A673 (cell line): ENCODE measurements at regions of chr10 and their contacts with region 1.

Region 1: GRCh38 chr10:74081192-74081803 is 69.3 kb downstream of the AP3M1 start:
- DNase-seq: peak; percentile 84
- H3K4me3 ChIP-seq: no peak overlapping the region
- H3K27ac ChIP-seq: peak overlapping the region; percentile 90
- H3K4me1 ChIP-seq: peaks cover 56% of the 10 kb centered on the region
- H3K27me3 ChIP-seq: no peaks in the 10 kb centered on the region
- CTCF ChIP-seq: peak; percentile 87

Region 2: GRCh38 chr10:73965890-73966768 is 115.2 kb before region 1 on chr10:
- CTCF ChIA-PET with region 1: interaction called, 11 read pairs
- POLR2A ChIA-PET with region 1: no interaction called
- intact Hi-C with region 1: loop called (anchors 2 kb)
- DNase-seq: peak; percentile 100
- H3K4me3 ChIP-seq: no peak overlapping the region
- H3K27ac ChIP-seq: peak overlapping the region; percentile 98
- H3K4me1 ChIP-seq: peaks cover 46% of the 10 kb centered on the region
- H3K27me3 ChIP-seq: no peaks in the 10 kb centered on the region
- CTCF ChIP-seq: no peak

Region 3: DNA sequence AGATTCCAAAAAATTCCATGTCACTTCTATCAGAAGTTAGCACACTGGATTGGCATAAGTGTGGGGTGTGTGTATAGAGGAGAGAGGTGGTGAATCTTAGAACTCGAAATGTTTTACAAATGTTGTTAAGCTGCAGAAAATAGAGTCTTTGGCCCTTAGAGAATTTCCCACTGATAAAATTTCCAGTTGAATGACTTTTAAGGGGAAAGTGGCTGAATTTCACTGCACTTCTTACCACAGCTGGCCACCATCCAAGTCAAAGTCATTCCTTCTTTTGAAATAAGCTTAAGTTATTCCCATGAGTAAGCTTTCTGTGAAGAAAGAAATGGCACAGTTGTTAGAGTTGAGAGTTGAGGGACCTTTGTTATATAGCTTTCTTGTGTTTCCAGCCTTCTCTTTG is 69.5 kb before region 1 on chr10:
- CTCF ChIA-PET with region 1: no interaction called
- POLR2A ChIA-PET with region 1: no interaction called
- intact Hi-C with region 1: loop called (anchors 2 kb)
- DNase-seq: peak; percentile 97
- H3K4me3 ChIP-seq: peak overlapping the region; percentile 23
- H3K27ac ChIP-seq: peak overlapping the region; percentile 74
- H3K4me1 ChIP-seq: peaks cover 75% of the 10 kb centered on the region
- H3K27me3 ChIP-seq: no peaks in the 10 kb centered on the region
- CTCF ChIP-seq: no peak

Region 4: DNA sequence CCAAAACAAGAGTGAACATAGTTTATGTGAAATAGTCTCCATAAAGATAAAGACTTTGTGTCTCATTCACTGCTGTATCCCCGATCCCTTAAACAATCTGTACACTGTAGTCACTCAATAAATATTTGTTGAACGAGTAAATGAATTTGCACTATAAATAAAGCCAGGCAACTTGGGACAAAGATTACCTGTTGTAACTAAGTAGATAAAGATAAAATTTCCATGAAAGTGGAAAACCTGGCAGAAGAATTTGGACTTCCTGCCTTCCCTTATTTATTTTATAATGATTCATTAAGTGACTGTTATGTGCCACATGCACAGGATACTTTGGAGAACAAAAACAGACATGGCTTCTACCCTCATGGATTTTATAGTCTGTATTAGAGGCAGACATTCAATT is 467.4 kb after region 1 on chr10:
- CTCF ChIA-PET with region 1: no interaction called
- POLR2A ChIA-PET with region 1: no interaction called
- intact Hi-C with region 1: no loop called
- DNase-seq: no peak
- H3K4me3 ChIP-seq: no peak overlapping the region
- H3K27ac ChIP-seq: no peak overlapping the region
- H3K4me1 ChIP-seq: no peaks in the 10 kb centered on the region
- H3K27me3 ChIP-seq: no peaks in the 10 kb centered on the region
- CTCF ChIP-seq: no peak